Heart right ventricle (tissue), 16 donors: ENCODE measurements at regions of chr5 and their contacts with region 1.

Region 1: DNA sequence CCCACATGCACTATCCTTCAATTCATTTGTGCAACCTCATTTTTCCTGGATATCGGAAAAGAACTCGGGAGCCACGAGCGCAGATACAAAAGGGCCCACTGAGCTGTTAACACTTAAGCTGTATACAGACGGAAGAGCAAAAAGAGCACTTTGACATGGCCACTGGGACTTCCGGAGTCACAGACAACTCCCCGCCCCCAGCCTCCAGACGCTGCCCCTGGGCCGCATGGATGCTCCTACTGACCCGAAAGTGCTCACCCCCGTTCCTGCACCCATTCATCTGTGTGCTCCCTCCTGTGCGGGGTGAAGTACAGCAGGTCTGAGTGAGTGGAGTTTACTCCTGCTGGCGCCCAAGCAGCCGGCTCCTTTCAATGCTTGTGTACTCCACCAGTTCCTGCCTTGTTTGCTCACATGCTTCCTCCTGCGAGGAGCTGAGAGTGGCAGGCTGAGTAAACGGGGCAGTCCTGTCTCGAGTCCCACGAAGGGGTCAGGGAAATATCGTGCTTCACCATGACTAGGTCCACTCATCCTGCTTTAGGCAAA is 901.0 kb upstream of the CTNND2 start:
- DNase-seq: no peak
- ATAC-seq: no peak
- H3K4me3 ChIP-seq: no peak overlapping the region
- H3K27ac ChIP-seq: no peak overlapping the region
- H3K4me1 ChIP-seq: no peaks in the 10 kb centered on the region
- H3K27me3 ChIP-seq: no peaks in the 10 kb centered on the region
- CTCF ChIP-seq: no peak

Region 2: GRCh38 chr5:12522116-12522515 is 283.1 kb before region 1 on chr5:
- intact Hi-C with region 1: no loop called
- DNase-seq: no peak
- ATAC-seq: no peak
- H3K4me3 ChIP-seq: no peak overlapping the region
- H3K27ac ChIP-seq: no peak overlapping the region
- H3K4me1 ChIP-seq: no peaks in the 10 kb centered on the region
- H3K27me3 ChIP-seq: no peaks in the 10 kb centered on the region
- CTCF ChIP-seq: no peak

Region 3: DNA sequence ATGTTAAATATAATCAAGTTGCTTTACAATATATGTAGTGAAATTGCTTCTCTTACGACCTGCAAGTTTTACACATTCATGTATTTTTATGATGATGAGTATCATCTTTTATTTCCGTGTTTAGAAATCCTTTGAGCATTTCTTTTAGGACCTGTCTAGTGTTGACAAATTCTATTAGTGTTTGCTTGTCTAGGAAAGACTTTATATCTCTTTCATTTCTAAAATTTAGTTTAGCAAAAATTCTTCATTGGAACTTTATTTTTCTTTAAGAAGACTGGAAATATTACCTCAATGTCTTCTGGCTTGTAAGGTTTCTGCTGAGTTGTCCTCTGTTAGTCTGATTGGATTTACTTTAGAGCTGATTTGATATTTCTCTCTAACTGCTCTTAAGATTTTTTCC is 19.9 kb after region 1 on chr5:
- intact Hi-C with region 1: loop called in 1 of 10 experiments (anchors 2 kb)
- DNase-seq: no peak
- ATAC-seq: no peak
- H3K4me3 ChIP-seq: no peak overlapping the region
- H3K27ac ChIP-seq: no peak overlapping the region
- H3K4me1 ChIP-seq: no peaks in the 10 kb centered on the region
- H3K27me3 ChIP-seq: no peaks in the 10 kb centered on the region
- CTCF ChIP-seq: no peak